AG04450 (cell line): ENCODE measurements at regions of chr7 and their contacts with region 1.

Region 1: GRCh38 chr7:1555809-1556540 is at the start of gene TMEM184A:
- DNase-seq: no peak
- H3K4me3 ChIP-seq: no peak within 1 kb of the TSS; the same call in 1 of the 2 replicates
- H3K27ac ChIP-seq: peak within 1 kb of the TSS; percentile 11
- H3K27me3 ChIP-seq: no peaks in the 10 kb centered on the region
- CTCF ChIP-seq: peak; percentile 20; the same call in 1 of the 2 replicates
- polyA plus RNA-seq, gene TMEM184A: 0.36 and 0.56 TPM in 2 replicates

Region 2: GRCh38 chr7:1537535-1538412 is 18.2 kb before region 1 on chr7:
- CTCF ChIA-PET with region 1: no interaction called
- POLR2A ChIA-PET with region 1: interaction called, 15 read pairs
- DNase-seq: peak; percentile 92
- H3K4me3 ChIP-seq: peak overlapping the region; percentile 65
- H3K27ac ChIP-seq: peak overlapping the region; percentile 100
- H3K27me3 ChIP-seq: no peaks in the 10 kb centered on the region
- CTCF ChIP-seq: no peak

Region 3: GRCh38 chr7:1650363-1651030 is 94.5 kb after region 1 on chr7:
- CTCF ChIA-PET with region 1: no interaction called
- POLR2A ChIA-PET with region 1: no interaction called
- DNase-seq: no peak
- H3K4me3 ChIP-seq: no peak overlapping the region
- H3K27ac ChIP-seq: no peak overlapping the region
- H3K27me3 ChIP-seq: peaks cover 33% of the 10 kb centered on the region
- CTCF ChIP-seq: no peak